ENCODE measurements at regions of chr15 and their contacts with region 1.

Region 1: DNA sequence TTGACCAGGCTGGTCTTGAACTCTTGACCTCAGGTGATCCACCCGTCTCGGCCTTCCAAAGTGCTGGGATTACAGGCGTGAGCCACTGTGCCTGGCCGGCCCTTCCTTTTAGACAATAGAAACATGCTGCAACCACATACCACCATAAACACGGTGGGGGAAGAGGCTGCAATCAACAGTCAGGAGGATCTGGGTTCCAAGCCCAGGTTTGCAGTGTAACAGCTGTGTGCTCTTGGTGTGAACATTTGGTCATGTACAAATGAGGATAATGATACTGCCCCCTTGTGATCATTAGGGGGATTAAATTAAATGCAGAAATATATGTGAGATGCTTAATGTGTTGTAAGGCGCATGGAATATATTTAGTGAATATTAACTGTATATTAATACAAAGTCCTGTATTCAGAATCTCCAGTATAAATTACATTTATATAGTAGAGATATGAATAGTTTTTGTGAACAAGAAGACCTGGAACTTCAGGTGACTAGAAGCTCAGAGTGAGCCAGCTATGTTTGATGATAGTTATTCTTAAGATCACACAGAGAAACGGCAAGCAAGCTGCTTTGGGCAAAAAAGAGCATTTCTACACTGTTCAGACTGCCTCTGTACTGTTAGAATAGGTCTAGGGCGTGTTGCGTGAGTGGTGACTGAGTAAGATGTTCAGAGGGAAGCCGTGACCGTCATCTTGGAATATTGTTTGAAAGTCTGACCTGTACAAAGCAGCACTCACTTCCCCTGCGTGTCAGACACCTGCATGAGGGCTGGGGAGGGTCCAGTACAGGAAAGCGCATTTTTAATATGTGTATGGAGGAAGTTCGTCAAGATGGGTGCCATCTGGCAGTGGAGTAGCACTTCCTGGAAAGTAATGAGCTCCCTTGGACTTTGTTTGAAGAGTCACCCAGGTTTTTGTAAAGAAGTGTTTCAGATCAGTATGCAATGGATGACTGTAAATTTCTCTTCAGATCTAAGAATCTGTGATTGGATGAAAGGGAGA is 125.8 kb downstream of the PGPEP1L start:
- DNase-seq: peak; percentile 51
- ATAC-seq: peak; percentile 41
- H3K4me3 ChIP-seq: no peak overlapping the region
- H3K4me3 Mint-ChIP-seq: no peak overlapping the region
- H3K27ac ChIP-seq: no peak overlapping the region
- H3K27ac Mint-ChIP-seq: peak overlapping the region; percentile 0
- H3K4me1 ChIP-seq: peaks cover 4% of the 10 kb centered on the region in 2 donors
- H3K4me1 Mint-ChIP-seq: peaks cover 9% of the 10 kb centered on the region
- H3K27me3 ChIP-seq: no peaks in the 10 kb centered on the region
- H3K27me3 Mint-ChIP-seq: no peaks in the 10 kb centered on the region
- CTCF ChIP-seq: peak; percentile 75

Region 2: DNA sequence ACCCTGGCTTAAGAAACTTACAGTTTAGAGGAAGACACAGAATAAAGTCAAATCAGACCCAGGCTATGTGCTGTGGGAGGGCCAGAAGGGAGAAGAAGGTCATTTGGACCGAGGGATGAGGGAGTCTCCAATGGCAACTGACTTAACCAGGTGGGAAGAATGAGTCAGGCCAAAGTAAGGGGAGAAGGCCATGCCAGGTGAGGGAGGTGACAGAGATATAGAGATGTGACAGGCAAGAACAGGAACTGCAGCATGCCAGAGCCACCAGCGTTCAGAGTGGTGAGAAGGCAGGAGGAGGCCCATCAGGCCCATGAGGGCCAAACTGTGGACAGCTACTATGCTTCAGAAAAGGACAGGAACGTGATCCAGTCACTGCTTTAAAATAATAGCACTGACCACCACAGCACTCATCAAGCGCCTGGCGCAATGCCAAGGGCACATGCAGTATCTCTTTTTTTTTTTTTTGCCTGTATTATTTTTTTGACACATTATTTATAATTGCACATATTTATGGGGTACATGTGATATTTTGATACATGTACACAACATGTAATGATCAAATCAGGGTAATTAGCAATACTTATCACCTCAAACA is 387.8 kb before region 1 on chr15:
- CTCF ChIA-PET with region 1: no interaction called
- POLR2A ChIA-PET with region 1: no interaction called
- intact Hi-C with region 1: no loop called
- DNase-seq: no peak
- ATAC-seq: no peak
- H3K4me3 ChIP-seq: no peak overlapping the region
- H3K4me3 Mint-ChIP-seq: no peak overlapping the region
- H3K27ac ChIP-seq: no peak overlapping the region
- H3K27ac Mint-ChIP-seq: no peak overlapping the region
- H3K4me1 ChIP-seq: no peaks in the 10 kb centered on the region
- H3K4me1 Mint-ChIP-seq: no peaks in the 10 kb centered on the region
- H3K27me3 ChIP-seq: no peaks in the 10 kb centered on the region
- H3K27me3 Mint-ChIP-seq: no peaks in the 10 kb centered on the region
- CTCF ChIP-seq: no peak

Region 3: GRCh38 chr15:98858610-98859023 is 23.2 kb before region 1 on chr15:
- CTCF ChIA-PET with region 1: interaction called, 12 read pairs
- POLR2A ChIA-PET with region 1: no interaction called
- intact Hi-C with region 1: no loop called
- DNase-seq: peak; percentile 25
- ATAC-seq: no peak
- H3K4me3 ChIP-seq: no peak overlapping the region
- H3K4me3 Mint-ChIP-seq: peak overlapping the region; percentile 29
- H3K27ac ChIP-seq: no peak overlapping the region
- H3K27ac Mint-ChIP-seq: no peak overlapping the region
- H3K4me1 ChIP-seq: peaks cover 5 to 6% of the 10 kb centered on the region in 2 donors
- H3K4me1 Mint-ChIP-seq: peaks cover 10% of the 10 kb centered on the region
- H3K27me3 ChIP-seq: no peaks in the 10 kb centered on the region
- H3K27me3 Mint-ChIP-seq: peaks cover 4% of the 10 kb centered on the region
- CTCF ChIP-seq: no peak

Measured in B cell (primary cell).